ENCODE measurements at regions of chr7 and their contacts with region 1.

Region 1: GRCh38 chr7:73851410-73852234 is 9.3 kb upstream of the METTL27 start:
- DNase-seq: peak; percentile 80
- CTCF ChIP-seq: no peak

Region 2: DNA sequence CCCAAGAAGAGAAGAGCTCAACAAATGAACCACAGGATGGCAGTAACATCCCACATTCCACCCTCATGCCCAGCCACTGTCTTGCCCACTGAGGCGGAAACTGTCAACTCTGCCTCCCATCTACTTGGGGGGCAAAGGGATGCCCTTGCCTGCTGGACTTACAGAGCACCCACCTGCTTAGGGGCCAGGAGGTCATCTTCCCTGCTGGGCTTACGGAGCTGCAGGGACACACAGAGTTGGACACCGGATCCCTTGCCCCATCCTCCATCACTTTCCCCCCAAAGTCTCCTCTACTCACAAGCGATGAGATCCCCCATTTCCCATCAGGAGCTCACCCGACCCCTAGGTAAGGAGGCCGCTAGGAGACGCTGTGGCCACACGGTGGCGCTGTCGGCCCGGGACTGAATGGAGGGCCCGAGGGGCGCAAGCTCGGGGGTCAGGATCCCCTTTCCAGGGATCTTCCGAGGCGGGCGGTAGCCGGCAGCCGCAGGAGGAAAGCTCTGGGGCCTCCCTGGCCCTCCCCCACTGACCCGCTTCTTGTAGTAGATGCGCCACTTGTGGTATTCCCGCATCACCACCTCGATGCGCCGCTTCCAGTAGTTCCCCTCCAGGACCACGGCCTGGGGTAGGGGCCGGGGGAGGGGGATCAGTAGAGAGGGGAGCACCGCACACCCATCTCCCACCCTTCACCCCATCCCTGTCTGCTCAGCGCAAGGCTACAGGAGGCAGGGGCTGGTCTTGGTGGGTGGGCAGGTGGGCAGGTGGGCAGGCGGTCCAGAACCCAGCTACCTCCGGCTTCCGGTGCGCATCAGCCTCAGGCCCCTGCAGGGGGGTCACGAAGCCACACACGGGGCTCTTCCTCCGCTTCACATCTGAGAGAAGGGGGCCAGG is 244.6 kb before region 1 on chr7:
- in situ Hi-C with region 1: loop called (anchors 25 kb)
- DNase-seq: peak; percentile 88
- CTCF ChIP-seq: peak; percentile 95

Measured in GM13977 (cell line).